Gastrocnemius medialis (tissue), 4 donors: ENCODE measurements at regions of chr4 and their contacts with region 1.

Region 1: GRCh38 chr4:87422104-87423052 is at the start of gene NUDT9:
- DNase-seq: peak; percentile 93 to 96
- ATAC-seq: peak; percentile 98
- H3K4me3 ChIP-seq: peak within 1 kb of the TSS; percentile 60 to 93 (median 66)
- H3K27ac ChIP-seq: peak within 1 kb of the TSS; percentile 88 to 94 (median 92)
- H3K4me1 ChIP-seq: peaks cover 15 to 23% of the 10 kb centered on the region in 2 donors
- H3K27me3 ChIP-seq: no peaks in the 10 kb centered on the region
- CTCF ChIP-seq: peak in 1 of 5 experiments; percentile 7
- POLR2A ChIP-seq: peak; percentile 66 to 73
- total RNA-seq, gene NUDT9: 13.4 to 16.7 (median 15.8) TPM

Region 2: DNA sequence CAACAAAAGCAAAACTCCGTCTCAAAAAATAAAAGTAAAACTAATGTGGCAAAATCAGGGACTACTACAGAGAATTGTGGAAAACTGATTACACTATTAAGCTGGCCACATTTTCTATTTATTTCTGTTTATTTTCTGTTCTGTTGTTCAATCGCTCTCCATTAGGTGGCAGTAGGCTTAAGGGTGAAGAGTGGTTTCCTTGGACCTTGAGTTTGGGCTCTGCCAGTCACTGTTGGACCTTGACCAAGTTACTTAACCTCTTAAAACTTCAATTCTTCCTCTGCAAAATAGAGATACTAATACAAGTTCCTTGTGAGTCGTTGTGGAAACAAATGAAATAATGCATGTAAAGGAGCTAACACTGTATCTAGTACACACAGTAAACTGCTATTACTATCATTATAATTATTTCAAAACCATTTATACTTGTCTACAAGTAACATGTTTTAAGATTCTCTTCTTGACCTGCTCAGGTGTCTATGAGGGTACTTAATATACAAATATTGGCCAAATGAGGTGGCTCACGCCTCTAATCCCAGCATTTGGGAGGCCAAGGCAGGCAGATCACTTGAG is 46.6 kb before region 1 on chr4:
- in situ Hi-C with region 1: no loop called
- intact Hi-C with region 1: loop called (anchors 5 kb)
- DNase-seq: peak in 1 of 2 donors; percentile 19
- ATAC-seq: peak; percentile 74 to 75
- H3K4me3 ChIP-seq: no peak overlapping the region
- H3K27ac ChIP-seq: peak overlapping the region in 2 of 4 donors; percentile 13 to 32
- H3K4me1 ChIP-seq: peaks cover 0 to 5% of the 10 kb centered on the region in 2 donors
- H3K27me3 ChIP-seq: no peaks in the 10 kb centered on the region
- CTCF ChIP-seq: peak; percentile 54 to 70 (median 60)
- POLR2A ChIP-seq: no peak

Region 3: DNA sequence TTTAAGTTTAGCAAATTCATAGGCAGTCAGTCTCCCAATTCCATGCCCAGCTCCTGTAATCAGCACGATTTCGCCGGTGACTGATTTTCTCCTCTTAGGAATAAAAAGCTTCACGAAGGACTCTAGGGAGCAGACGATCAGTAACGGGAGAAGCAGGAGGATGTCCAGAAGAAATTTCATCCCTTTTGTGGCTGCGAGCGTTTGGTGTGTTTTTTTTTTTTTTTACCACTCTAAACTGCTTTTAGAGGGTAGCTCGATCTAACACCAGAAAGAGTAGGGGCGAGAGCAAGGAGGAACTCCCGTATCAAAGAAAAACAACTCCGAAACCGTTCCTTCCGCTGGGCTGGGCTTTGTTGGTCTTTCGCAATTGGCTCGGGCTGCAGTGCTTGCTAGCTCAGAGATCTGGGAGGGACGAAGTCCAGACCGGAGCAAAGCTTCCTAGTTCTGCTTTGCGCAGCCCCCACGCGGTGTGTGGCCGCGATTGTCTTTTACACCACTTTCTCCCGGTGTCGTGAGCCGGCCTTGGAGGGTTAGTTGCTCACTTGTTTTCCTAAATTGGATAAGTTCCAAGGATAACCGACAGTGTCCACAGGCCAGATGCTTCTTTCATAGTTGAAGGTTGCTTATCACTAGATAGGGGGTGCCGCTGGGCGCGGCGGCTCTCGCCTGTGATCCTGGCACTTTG is 31.3 kb before region 1 on chr4 and contains the start of gene HSD17B11:
- in situ Hi-C with region 1: no loop called
- intact Hi-C with region 1: loop called (anchors 1 kb)
- DNase-seq: peak; percentile 81 to 82
- ATAC-seq: peak; percentile 95 to 99
- H3K4me3 ChIP-seq: peak within 1 kb of the TSS; percentile 55 to 71 (median 63)
- H3K27ac ChIP-seq: peak within 1 kb of the TSS; percentile 65 to 79 (median 78)
- H3K4me1 ChIP-seq: peaks cover 0 to 5% of the 10 kb centered on the region in 2 donors
- H3K27me3 ChIP-seq: no peaks in the 10 kb centered on the region
- CTCF ChIP-seq: peak in 1 of 5 experiments; percentile 30
- POLR2A ChIP-seq: peak; percentile 50 to 81
- total RNA-seq, gene HSD17B11: 15.3 to 34.9 (median 19.2) TPM